ENCODE measurements at regions of chr9 and their contacts with region 1.

Region 1: GRCh38 chr9:15135164-15135792 is 171.7 kb downstream of the TTC39B start:
- DNase-seq: peak; percentile 71 to 72
- ATAC-seq: peak; percentile 97
- H3K4me3 ChIP-seq: peak overlapping the region; percentile 26
- H3K27ac ChIP-seq: 0 out of 6 replicates have a peak overlapping the region, but pooled peaks of 1 of the 2 experiments have one; percentile 7
- H3K4me1 ChIP-seq: no peaks in the 10 kb centered on the region
- CTCF ChIP-seq: peak; percentile 71
- EP300 ChIP-seq: no peak
- POLR2A ChIP-seq: no peak
- RAD21 ChIP-seq: peak; percentile 74 to 76

Region 2: GRCh38 chr9:15032860-15033259 is 102.4 kb before region 1 on chr9:
- CTCF ChIA-PET with region 1: no interaction called
- POLR2A ChIA-PET with region 1: no interaction called
- DNase-seq: no peak
- ATAC-seq: no peak
- H3K4me3 ChIP-seq: no peak overlapping the region
- H3K27ac ChIP-seq: no peak overlapping the region
- H3K4me1 ChIP-seq: no peaks in the 10 kb centered on the region
- CTCF ChIP-seq: no peak
- EP300 ChIP-seq: no peak
- POLR2A ChIP-seq: no peak
- RAD21 ChIP-seq: no peak

Region 3: GRCh38 chr9:15104826-15105420 is 30.4 kb before region 1 on chr9:
- CTCF ChIA-PET with region 1: interaction called, 29 read pairs
- POLR2A ChIA-PET with region 1: no interaction called
- DNase-seq: peak; percentile 24 to 41
- ATAC-seq: peak; percentile 78 to 80
- H3K4me3 ChIP-seq: no peak overlapping the region
- H3K27ac ChIP-seq: no peak overlapping the region
- H3K4me1 ChIP-seq: no peaks in the 10 kb centered on the region
- CTCF ChIP-seq: peak; percentile 50
- EP300 ChIP-seq: no peak
- POLR2A ChIP-seq: no peak
- RAD21 ChIP-seq: peak; percentile 43 to 45

Region 4: DNA sequence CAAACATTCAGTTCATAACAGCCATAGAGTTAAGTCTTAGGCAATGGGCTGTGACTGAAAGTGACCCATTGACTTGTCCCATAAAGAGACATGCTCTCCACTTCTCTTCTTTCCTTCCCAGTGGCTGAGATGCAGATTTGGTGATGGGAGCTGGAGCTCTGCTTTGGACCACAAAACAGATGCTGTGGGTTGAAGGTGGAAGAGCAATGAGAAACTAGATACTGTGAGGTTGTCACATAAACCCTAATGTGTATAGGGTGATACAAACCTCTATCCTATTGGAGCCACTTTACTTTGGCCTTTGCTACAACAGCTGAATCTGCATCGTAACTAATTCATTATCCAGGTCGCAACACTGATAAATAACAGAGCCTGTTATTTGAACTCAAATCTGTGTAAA is 20.2 kb before region 1 on chr9:
- CTCF ChIA-PET with region 1: interaction called, 10 read pairs
- POLR2A ChIA-PET with region 1: no interaction called
- DNase-seq: no peak
- ATAC-seq: no peak
- H3K4me3 ChIP-seq: no peak overlapping the region
- H3K27ac ChIP-seq: no peak overlapping the region
- H3K4me1 ChIP-seq: no peaks in the 10 kb centered on the region
- CTCF ChIP-seq: no peak
- EP300 ChIP-seq: no peak
- POLR2A ChIP-seq: no peak
- RAD21 ChIP-seq: no peak